Naive thymus-derived CD4-positive, alpha-beta T cell (primary cell): ENCODE measurements at regions of chr3 and their contacts with region 1.

Region 1: GRCh38 chr3:69051756-69052471 is at the start of gene TMF1:
- DNase-seq: peak; percentile 93 to 98 (median 98)
- ATAC-seq: peak; percentile 95
- H3K4me3 ChIP-seq: peak within 1 kb of the TSS; percentile 96
- H3K4me3 Mint-ChIP-seq: peak within 1 kb of the TSS; percentile 94 to 99 (median 96)
- H3K27ac ChIP-seq: peak within 1 kb of the TSS; percentile 87
- H3K27ac Mint-ChIP-seq: peak within 1 kb of the TSS; percentile 92 to 99 (median 98)
- H3K4me1 ChIP-seq: peaks cover 20 to 30% of the 10 kb centered on the region in 2 donors
- H3K4me1 Mint-ChIP-seq: peaks cover 20 to 59% (median 48%) of the 10 kb centered on the region in 7 donors
- H3K27me3 ChIP-seq: no peaks in the 10 kb centered on the region
- H3K27me3 Mint-ChIP-seq: peaks cover 0 to 2% (median 0%) of the 10 kb centered on the region in 5 donors
- total RNA-seq, gene TMF1: 41.3 to 71.8 (median 52.8) TPM

Region 2: DNA sequence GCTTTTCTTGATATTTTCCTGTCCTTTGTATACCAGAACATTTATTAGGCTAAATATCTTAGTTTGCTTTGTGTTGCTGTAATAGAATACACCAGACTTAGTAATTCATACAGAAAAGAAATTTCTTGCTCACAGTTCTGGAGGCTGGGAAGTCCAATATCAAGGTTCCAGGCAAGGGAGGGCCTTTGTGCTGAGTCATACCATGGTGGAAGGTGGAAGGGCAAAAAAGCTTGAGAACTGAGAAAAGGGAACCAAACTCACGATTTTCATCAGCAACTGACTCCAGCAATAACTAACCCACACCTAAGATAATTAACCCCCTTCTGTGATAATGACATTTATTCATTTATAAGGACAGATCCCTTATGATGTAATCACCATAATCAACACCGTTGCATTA is 900.6 kb before region 1 on chr3:
- CTCF ChIA-PET with region 1: no interaction called
- POLR2A ChIA-PET with region 1: no interaction called
- intact Hi-C with region 1: no loop called
- DNase-seq: no peak
- ATAC-seq: no peak
- H3K4me3 ChIP-seq: no peak overlapping the region
- H3K4me3 Mint-ChIP-seq: no peak overlapping the region
- H3K27ac ChIP-seq: no peak overlapping the region
- H3K27ac Mint-ChIP-seq: no peak overlapping the region
- H3K4me1 ChIP-seq: no peaks in the 10 kb centered on the region
- H3K4me1 Mint-ChIP-seq: peaks cover 0 to 9% (median 0%) of the 10 kb centered on the region in 7 donors
- H3K27me3 ChIP-seq: no peaks in the 10 kb centered on the region
- H3K27me3 Mint-ChIP-seq: no peaks in the 10 kb centered on the region

Region 3: DNA sequence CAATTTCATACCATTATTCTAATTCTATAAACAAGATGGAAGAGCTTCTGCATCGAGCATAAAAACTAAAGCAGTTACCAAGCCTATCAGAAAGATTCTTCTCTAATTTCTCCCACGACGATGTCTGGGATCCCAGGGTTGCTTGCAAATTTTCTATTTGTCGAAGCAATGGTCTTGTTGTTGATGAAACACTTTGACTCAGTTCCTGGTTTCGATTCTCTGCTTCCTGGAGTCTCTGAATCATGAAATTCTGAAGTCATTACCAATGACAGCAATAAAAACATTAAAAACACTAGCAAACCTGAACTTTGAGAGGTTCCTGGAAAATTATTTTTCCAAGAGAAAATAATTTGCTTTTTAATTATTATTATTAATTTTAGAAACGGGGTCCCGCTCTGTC is 18.4 kb before region 1 on chr3:
- CTCF ChIA-PET with region 1: interaction called, 3 read pairs
- POLR2A ChIA-PET with region 1: interaction called, 3 read pairs
- intact Hi-C with region 1: loop called in 1 of 2 experiments (anchors 2 kb)
- DNase-seq: no peak
- ATAC-seq: peak; percentile 50
- H3K4me3 ChIP-seq: no peak overlapping the region
- H3K4me3 Mint-ChIP-seq: no peak overlapping the region
- H3K27ac ChIP-seq: no peak overlapping the region
- H3K27ac Mint-ChIP-seq: peak overlapping the region in 2 of 9 donors; percentile 9 to 52
- H3K4me1 ChIP-seq: no peaks in the 10 kb centered on the region
- H3K4me1 Mint-ChIP-seq: peaks cover 0 to 21% (median 3%) of the 10 kb centered on the region in 7 donors
- H3K27me3 ChIP-seq: no peaks in the 10 kb centered on the region
- H3K27me3 Mint-ChIP-seq: no peaks in the 10 kb centered on the region

Region 4: DNA sequence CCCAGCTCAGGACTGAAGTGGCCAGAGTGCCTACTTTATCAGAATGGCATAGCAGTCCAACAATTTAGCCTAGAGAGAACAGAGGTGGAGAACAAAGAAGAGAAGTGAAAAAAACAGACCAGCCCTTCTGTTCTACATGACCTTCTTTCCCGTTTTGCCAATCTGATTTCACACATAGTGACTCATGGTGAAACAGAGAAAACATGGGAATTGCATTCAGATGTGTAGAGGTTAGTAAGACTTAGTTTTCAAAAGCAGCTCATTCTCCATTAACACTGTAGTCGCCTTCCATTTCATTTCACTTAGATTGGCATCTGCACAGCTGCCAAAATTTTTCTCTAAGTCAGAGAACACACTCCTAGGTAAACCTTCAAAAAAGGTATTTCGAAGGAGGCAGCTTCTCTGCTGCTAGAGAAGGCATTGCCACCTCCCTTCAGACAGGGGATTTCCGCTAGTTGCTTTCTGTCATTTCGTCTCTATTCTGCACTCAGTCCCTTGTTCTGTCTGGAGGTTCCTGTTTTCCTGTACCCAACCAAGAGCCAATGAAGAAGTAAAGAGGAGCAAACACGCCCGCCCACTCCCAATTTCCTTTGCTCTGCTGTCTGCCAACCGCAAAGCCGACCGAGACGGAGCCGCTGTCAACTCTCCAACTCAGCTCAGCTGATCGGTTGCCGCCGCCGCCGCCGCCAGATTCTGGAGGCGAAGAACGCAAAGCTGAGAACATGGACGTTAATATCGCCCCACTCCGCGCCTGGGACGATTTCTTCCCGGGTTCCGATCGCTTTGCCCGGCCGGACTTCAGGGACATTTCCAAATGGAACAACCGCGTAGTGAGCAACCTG is 32.6 kb after region 1 on chr3 and contains the start of gene ARL6IP5:
- CTCF ChIA-PET with region 1: interaction called, 4 read pairs
- POLR2A ChIA-PET with region 1: interaction called, 103 read pairs
- intact Hi-C with region 1: loop called (anchors 1 kb)
- DNase-seq: peak; percentile 71 to 95 (median 93)
- ATAC-seq: peak; percentile 84
- H3K4me3 ChIP-seq: peak within 1 kb of the TSS; percentile 89
- H3K4me3 Mint-ChIP-seq: peak within 1 kb of the TSS; percentile 88 to 99 (median 97)
- H3K27ac ChIP-seq: peak within 1 kb of the TSS; percentile 76
- H3K27ac Mint-ChIP-seq: peak within 1 kb of the TSS; percentile 92 to 99 (median 98)
- H3K4me1 ChIP-seq: peaks cover 58% of the 10 kb centered on the region in 2 donors
- H3K4me1 Mint-ChIP-seq: peaks cover 44 to 72% (median 62%) of the 10 kb centered on the region in 7 donors
- H3K27me3 ChIP-seq: no peaks in the 10 kb centered on the region
- H3K27me3 Mint-ChIP-seq: no peaks in the 10 kb centered on the region
- total RNA-seq, gene ARL6IP5: 75.8 to 226 (median 119) TPM

Region 5: GRCh38 chr3:69120879-69121464 is 69.1 kb after region 1 on chr3:
- CTCF ChIA-PET with region 1: no interaction called
- POLR2A ChIA-PET with region 1: no interaction called
- intact Hi-C with region 1: loop called in 1 of 2 experiments (anchors 1 kb)
- DNase-seq: peak; percentile 35 to 85 (median 78)
- ATAC-seq: peak; percentile 94
- H3K4me3 ChIP-seq: no peak overlapping the region
- H3K4me3 Mint-ChIP-seq: peak overlapping the region in 1 of 10 donors; percentile 16
- H3K27ac ChIP-seq: no peak overlapping the region
- H3K27ac Mint-ChIP-seq: peak overlapping the region in 1 of 9 donors; percentile 31
- H3K4me1 ChIP-seq: no peaks in the 10 kb centered on the region
- H3K4me1 Mint-ChIP-seq: peaks cover 1 to 10% (median 6%) of the 10 kb centered on the region in 7 donors
- H3K27me3 ChIP-seq: no peaks in the 10 kb centered on the region
- H3K27me3 Mint-ChIP-seq: peaks cover 0 to 7% (median 4%) of the 10 kb centered on the region in 5 donors